ENCODE measurements at regions of chr14 and their contacts with region 1.

Region 1: DNA sequence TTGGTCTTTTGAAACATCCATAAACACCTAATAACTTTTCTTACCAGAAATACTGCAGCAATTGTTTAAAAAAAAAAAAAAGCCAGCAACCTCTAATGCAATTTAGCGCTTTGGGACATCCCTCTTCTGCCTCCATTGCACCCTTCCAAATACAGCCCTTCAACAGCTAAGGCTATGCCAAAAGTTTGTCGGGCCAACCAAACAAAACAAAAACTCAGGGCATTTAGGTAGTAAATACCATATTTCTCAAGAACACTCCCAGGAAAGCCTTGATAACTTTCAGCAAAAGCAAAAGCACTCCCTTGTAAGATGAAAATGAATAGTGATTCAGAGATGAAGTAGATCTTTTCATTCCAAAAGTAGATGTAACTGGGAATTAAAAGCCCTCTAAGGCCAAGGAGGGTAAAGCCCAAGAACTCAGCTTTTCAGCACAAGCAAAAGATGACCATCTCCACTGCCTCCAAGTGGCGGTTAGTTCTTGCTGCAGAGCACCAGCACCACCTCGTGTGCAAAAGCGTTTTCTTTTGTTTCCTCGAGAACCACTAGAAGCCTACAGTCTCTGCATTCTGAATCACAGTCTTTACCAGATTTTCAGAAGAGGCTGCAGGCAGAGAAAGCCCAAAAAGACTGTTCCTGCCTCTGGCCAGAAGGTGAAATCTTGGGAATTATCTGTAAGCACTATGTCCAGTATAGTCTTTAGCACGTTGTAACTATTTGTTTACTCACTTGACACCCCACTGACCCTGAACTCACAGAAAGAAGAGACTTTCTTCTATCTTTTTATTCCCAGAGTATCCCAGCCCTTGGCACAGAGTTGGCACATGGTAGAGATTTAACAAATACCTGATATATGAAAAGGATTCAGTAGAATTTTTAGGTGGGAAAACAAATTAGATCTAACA is 53.1 kb downstream of the SIX6 start:
- DNase-seq: peak; percentile 39
- ATAC-seq: peak; percentile 83 to 93

Region 2: DNA sequence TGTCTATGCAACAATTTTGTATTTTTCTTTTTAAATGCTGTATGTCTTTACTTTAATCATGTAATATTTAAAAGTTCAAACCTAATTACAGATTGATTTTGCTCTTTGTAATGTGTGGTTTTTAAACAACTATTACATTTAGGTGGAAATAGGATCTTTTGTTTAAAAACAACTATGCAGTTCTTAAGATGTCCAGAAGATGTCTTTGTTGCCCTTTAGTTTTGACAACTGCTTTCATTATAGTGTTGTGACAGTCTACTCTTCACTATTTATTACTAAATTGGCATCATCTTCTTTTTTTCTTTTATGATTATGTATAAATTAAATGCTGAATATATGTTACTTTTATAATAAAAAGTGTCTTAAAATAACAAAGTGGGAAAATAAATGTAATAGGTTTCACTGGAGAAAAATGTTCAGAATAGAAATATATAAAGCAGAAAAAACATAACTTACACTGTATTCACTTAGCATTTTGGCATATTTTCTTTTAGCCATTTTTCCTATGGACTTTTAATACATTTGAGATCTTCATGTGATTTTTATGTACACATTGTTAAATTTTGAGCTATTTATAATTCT is 497.5 kb before region 1 on chr14:
- intact Hi-C with region 1: loop called in 1 of 2 experiments (anchors 10 kb)
- DNase-seq: no peak
- ATAC-seq: no peak

Region 3: GRCh38 chr14:60195179-60195810 is 366.8 kb before region 1 on chr14:
- intact Hi-C with region 1: loop called (anchors 5 to 10 kb)
- DNase-seq: no peak
- ATAC-seq: peak in 1 of 2 donors; percentile 38

Region 4: GRCh38 chr14:60349663-60350365 is 212.3 kb before region 1 on chr14:
- intact Hi-C with region 1: loop called (anchors 2 to 10 kb)
- DNase-seq: no peak
- ATAC-seq: peak; percentile 55 to 63